Endothelial cell of umbilical vein (primary cell): ENCODE measurements at regions of chr2 and their contacts with region 1.

Region 1: DNA sequence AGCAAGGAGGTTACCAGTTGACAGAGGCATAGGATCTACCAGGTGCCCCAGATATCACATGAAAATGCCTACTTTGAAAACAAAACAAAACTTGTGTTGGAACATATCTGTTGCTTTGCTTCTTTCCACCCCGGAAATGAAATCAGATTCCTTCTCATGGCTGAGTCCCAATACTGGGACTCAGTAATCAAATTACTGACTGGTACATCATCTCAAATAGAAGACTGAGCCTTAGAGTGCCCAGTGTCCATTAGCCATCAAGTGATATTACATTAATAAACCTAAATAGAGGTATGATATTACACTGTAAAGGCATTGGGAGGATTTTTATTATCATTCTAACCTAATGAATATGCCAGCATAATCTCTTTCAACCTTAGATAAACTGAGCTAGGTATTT is 48.6 kb upstream of the MSTN start:
- DNase-seq: no peak
- H3K4me3 ChIP-seq: no peak overlapping the region
- H3K27ac ChIP-seq: no peak overlapping the region
- H3K4me1 ChIP-seq: no peaks in the 10 kb centered on the region
- H3K27me3 ChIP-seq: peaks cover 0 to 2% of the 10 kb centered on the region in 2 experiments
- CTCF ChIP-seq: no peak
- POLR2A ChIP-seq: no peak

Region 2: GRCh38 chr2:190121971-190122370 is 10.8 kb after region 1 on chr2:
- CTCF ChIA-PET with region 1: interaction called, 10 read pairs
- POLR2A ChIA-PET with region 1: no interaction called
- dilution Hi-C with region 1: no loop called
- intact Hi-C with region 1: no loop called
- DNase-seq: peak; percentile 52
- H3K4me3 ChIP-seq: no peak overlapping the region
- H3K27ac ChIP-seq: no peak overlapping the region
- H3K4me1 ChIP-seq: no peaks in the 10 kb centered on the region
- H3K27me3 ChIP-seq: no peaks in the 10 kb centered on the region
- CTCF ChIP-seq: peak; percentile 8 to 39
- POLR2A ChIP-seq: no peak